ENCODE measurements at regions of chr6 and their contacts with region 1.

Region 1: GRCh38 chr6:111483736-111484632 is 966 bp upstream of the REV3L start:
- DNase-seq: peak; percentile 97
- H3K4me3 ChIP-seq: peak overlapping the region; percentile 91 to 98
- H3K27ac ChIP-seq: peak overlapping the region; percentile 100
- H3K4me1 ChIP-seq: peaks cover 7% of the 10 kb centered on the region
- H3K27me3 ChIP-seq: no peaks in the 10 kb centered on the region
- CTCF ChIP-seq: no peak
- POLR2A ChIP-seq: no peak

Region 2: GRCh38 chr6:111154981-111155380 is 329.0 kb before region 1 on chr6:
- intact Hi-C with region 1: no loop called
- DNase-seq: no peak
- H3K4me3 ChIP-seq: no peak overlapping the region
- H3K27ac ChIP-seq: no peak overlapping the region
- H3K4me1 ChIP-seq: no peaks in the 10 kb centered on the region
- H3K27me3 ChIP-seq: no peaks in the 10 kb centered on the region
- CTCF ChIP-seq: no peak
- POLR2A ChIP-seq: no peak

Region 3: GRCh38 chr6:111291336-111292259 is 192.4 kb before region 1 on chr6:
- intact Hi-C with region 1: no loop called
- DNase-seq: no peak
- H3K4me3 ChIP-seq: no peak overlapping the region
- H3K27ac ChIP-seq: no peak overlapping the region
- H3K4me1 ChIP-seq: no peaks in the 10 kb centered on the region
- H3K27me3 ChIP-seq: no peaks in the 10 kb centered on the region
- CTCF ChIP-seq: no peak
- POLR2A ChIP-seq: no peak

Region 4: DNA sequence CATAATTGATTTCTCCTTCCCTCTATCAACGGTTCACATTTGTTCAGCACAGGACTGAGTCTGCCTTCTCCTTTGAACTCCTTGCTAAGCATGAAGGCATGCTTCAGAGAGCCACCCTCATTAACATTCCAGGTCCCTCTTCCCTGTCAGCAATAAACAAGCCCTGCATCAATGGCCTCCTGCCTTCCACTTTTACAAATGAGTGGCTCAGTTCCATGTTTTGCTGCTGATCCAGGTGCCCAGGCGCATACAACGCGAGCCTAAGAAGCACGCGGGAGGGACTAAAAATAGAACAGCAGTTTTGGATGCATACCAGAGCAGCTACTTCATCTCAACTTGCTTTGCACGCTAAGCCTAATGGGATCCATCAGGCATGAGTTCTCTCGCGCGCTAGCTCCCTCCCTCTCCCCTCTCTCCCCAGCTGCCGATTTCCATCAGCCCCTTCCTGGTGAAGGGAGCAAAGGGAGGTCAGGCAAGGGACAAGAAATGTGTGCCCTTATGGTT is 68.3 kb after region 1 on chr6:
- intact Hi-C with region 1: loop called (anchors 5 kb)
- DNase-seq: peak; percentile 89
- H3K4me3 ChIP-seq: no peak overlapping the region
- H3K27ac ChIP-seq: peak overlapping the region; percentile 16 to 65
- H3K4me1 ChIP-seq: peaks cover 22% of the 10 kb centered on the region
- H3K27me3 ChIP-seq: no peaks in the 10 kb centered on the region
- CTCF ChIP-seq: no peak
- POLR2A ChIP-seq: no peak

Region 5: GRCh38 chr6:111774346-111774703 is 290.3 kb after region 1 on chr6:
- intact Hi-C with region 1: no loop called
- DNase-seq: no peak
- H3K4me3 ChIP-seq: no peak overlapping the region
- H3K27ac ChIP-seq: no peak overlapping the region
- H3K4me1 ChIP-seq: peaks cover 9% of the 10 kb centered on the region
- H3K27me3 ChIP-seq: no peaks in the 10 kb centered on the region
- CTCF ChIP-seq: no peak
- POLR2A ChIP-seq: no peak

Measured in testis (tissue), 5 donors.